Posterior vena cava (tissue), 2 donors: ENCODE measurements at regions of chr11 and their contacts with region 1.

Region 1: DNA sequence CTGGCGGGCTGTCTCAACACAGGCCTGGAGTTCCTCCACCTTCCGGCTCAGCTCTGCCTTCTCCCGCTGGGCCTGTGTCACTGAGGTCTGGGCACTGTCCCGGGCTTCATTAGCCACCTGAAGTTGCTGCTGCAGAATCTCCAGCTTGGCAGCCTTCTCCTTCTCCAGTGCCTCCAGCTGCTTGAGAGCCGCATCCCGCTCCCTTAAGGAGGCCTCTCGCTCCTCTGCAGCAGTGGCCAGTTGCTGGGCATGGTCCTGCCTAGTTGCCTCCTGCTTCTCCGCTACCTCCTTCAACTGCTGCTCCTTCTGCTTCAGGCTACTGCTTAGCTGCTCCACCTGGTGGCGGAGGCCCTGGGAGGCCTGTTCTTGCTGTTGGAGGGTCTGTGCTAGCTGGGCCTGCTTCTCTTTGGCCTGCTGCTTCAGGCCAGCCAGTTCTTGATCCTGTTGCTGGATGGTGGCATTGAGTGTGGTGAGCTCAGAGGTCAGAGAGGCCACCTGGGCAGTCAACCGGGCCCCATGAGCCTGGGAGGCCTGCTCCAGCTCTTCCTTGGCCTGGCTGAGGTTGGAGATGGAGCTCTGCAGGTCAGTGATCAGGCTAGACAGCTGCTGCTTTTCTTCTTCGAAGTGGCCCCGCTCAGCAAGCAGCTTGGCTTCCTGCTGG is 16.9 kb downstream of the IL18BP start:
- DNase-seq: no peak

Region 2: DNA sequence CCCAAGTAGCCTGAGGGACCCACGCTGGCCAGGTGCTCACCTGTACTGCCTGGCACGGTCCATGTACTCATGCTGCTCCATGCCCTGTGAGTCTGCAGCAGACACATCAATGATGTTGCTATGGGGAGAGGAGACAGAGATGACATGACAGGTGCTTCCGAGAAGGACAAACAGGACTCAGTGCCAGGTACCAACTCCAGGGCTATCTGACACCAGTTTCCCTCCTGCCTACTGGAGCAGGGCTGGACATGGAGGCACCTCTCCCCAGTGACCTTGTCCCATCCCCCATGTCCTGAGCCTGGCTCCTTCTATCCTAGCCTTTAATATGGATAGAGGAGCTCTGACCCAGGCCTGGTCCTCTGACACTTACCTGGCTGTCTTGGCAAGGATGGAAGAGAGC is 83.1 kb after region 1 on chr11:
- intact Hi-C with region 1: loop called in 1 of 2 experiments (anchors 5 kb)
- DNase-seq: no peak

Region 3: GRCh38 chr11:72238040-72238450 is 222.4 kb after region 1 on chr11:
- intact Hi-C with region 1: loop called in 1 of 2 experiments (anchors 10 kb)
- DNase-seq: no peak